Sigmoid colon (tissue), 7 donors: ENCODE measurements at regions of chr20 and their contacts with region 1.

Region 1: GRCh38 chr20:62407221-62407992 is at the start of gene CABLES2:
- DNase-seq: peak; percentile 97
- H3K4me3 ChIP-seq: peak within 1 kb of the TSS; percentile 55 to 82 (median 71)
- H3K27ac ChIP-seq: peak within 1 kb of the TSS; percentile 55 to 78 (median 66)
- H3K4me1 ChIP-seq: peaks cover 0 to 40% (median 39%) of the 10 kb centered on the region in 4 donors
- H3K27me3 ChIP-seq: no peaks in the 10 kb centered on the region
- CTCF ChIP-seq: peak in 2 of 4 experiments; percentile 38
- EP300 ChIP-seq: no peak
- POLR2A ChIP-seq: no peak
- total RNA-seq, gene CABLES2: 1.8 to 6.5 (median 4.2) TPM

Region 2: GRCh38 chr20:61951695-61952533 is 455.5 kb before region 1 on chr20:
- intact Hi-C with region 1: no loop called
- DNase-seq: peak; percentile 46
- H3K4me3 ChIP-seq: no peak overlapping the region
- H3K27ac ChIP-seq: no peak overlapping the region
- H3K4me1 ChIP-seq: no peaks in the 10 kb centered on the region
- H3K27me3 ChIP-seq: peaks cover 5 to 12% (median 10%) of the 10 kb centered on the region in 3 donors
- CTCF ChIP-seq: no peak
- EP300 ChIP-seq: no peak
- POLR2A ChIP-seq: no peak

Region 3: GRCh38 chr20:62494980-62495748 is 87.8 kb after region 1 on chr20:
- intact Hi-C with region 1: loop called (anchors 2 kb)
- DNase-seq: no peak
- H3K4me3 ChIP-seq: no peak overlapping the region
- H3K27ac ChIP-seq: peak overlapping the region in 3 of 4 donors; percentile 2 to 66 (median 16)
- H3K4me1 ChIP-seq: peaks cover 0 to 36% (median 16%) of the 10 kb centered on the region in 4 donors
- H3K27me3 ChIP-seq: peaks cover 0 to 19% (median 8%) of the 10 kb centered on the region in 3 donors
- CTCF ChIP-seq: no peak
- EP300 ChIP-seq: no peak
- POLR2A ChIP-seq: no peak

Region 4: GRCh38 chr20:62616728-62617621 is 209.6 kb after region 1 on chr20:
- intact Hi-C with region 1: loop called (anchors 5 kb)
- DNase-seq: peak; percentile 88
- H3K4me3 ChIP-seq: no peak overlapping the region
- H3K27ac ChIP-seq: peak overlapping the region; percentile 40 to 52 (median 49)
- H3K4me1 ChIP-seq: peaks cover 0 to 8% (median 2%) of the 10 kb centered on the region in 4 donors
- H3K27me3 ChIP-seq: no peaks in the 10 kb centered on the region
- CTCF ChIP-seq: peak; percentile 91 to 97 (median 94)
- EP300 ChIP-seq: peak in 1 of 4 donors; percentile 18
- POLR2A ChIP-seq: no peak